ENCODE measurements at regions of chr2 and their contacts with region 1.

Region 1: DNA sequence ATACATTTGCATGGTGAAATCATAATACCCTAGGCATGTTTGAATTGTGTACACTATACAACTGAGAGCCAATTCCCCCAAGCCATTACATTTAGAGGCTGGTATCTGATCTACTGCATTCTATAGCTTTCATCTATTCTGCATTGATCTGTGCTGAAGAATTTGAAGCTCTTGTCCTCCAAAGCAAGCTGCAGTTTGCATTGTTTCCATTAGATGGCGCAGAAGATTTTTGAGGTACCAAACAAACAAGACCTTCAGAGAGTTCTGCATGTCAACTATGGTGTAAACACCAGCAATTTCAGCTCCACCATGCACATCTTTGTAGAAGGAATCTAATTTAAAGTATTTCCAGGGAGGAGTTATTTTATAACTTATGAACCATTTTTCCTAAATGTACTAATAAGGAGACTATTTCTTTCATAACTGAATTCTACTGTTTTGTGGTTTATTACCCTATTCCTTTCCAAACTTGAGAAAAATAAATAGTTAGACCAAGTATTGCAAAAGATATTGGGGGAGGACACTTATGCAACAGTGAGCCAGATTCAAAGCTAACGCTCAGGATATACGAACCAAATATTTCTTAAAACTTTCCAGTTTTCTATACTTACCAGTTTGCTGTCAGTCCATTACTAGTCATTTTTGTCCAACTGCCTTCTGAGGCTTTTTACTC is 761.8 kb upstream of the ACVR2A start:
- DNase-seq: peak; percentile 47
- H3K4me3 Mint-ChIP-seq: no peak overlapping the region
- H3K27ac Mint-ChIP-seq: no peak overlapping the region
- H3K4me1 Mint-ChIP-seq: peaks cover 5% of the 10 kb centered on the region
- H3K27me3 Mint-ChIP-seq: no peaks in the 10 kb centered on the region

Region 2: GRCh38 chr2:147045113-147045512 is 37.9 kb before region 1 on chr2:
- CTCF ChIA-PET with region 1: interaction called, 31 read pairs
- POLR2A ChIA-PET with region 1: no interaction called
- intact Hi-C with region 1: no loop called
- DNase-seq: peak; percentile 67
- H3K4me3 Mint-ChIP-seq: no peak overlapping the region
- H3K27ac Mint-ChIP-seq: no peak overlapping the region
- H3K4me1 Mint-ChIP-seq: peaks cover 3% of the 10 kb centered on the region
- H3K27me3 Mint-ChIP-seq: no peaks in the 10 kb centered on the region

Region 3: DNA sequence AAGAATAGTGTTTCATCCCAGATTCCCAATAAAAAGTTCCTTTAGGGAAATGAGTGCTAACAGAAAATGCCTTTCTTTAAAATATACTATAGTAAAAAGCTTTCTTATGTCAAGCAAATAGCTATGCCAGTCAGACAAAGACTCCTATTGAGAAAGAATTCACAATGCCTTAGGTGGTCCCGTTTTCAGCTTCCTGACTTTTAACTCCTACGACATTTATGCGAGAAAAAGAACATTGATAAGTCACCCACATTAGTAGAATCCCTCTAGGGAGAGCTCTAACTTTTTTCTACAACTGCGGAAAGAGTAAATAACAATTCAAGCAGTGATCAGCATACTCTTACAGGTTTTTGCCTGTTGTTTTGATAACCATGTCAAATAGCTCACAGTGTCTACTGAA is 11.1 kb after region 1 on chr2:
- CTCF ChIA-PET with region 1: interaction called, 26 read pairs
- POLR2A ChIA-PET with region 1: no interaction called
- intact Hi-C with region 1: no loop called
- DNase-seq: no peak
- H3K4me3 Mint-ChIP-seq: no peak overlapping the region
- H3K27ac Mint-ChIP-seq: no peak overlapping the region
- H3K4me1 Mint-ChIP-seq: peaks cover 11% of the 10 kb centered on the region
- H3K27me3 Mint-ChIP-seq: no peaks in the 10 kb centered on the region

Region 4: DNA sequence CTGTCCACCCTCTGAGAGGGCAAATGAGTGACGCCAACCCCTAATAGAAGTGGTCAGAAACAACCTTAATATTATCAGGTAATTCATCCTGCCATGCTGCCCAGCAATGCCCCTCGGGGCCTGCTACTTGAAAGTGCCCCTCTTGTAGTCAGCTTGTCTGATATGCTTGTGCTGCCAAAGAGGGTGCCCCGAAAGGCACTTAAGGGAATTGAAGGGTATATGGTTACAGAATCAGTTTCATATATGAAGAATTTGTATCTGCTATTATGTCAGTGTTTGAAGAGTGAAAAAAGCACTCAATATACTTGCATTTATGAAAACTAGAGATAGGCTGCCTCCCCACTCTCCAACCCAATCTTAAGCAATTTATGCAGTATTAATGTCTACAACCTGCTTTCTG is 114.8 kb after region 1 on chr2:
- CTCF ChIA-PET with region 1: no interaction called
- POLR2A ChIA-PET with region 1: no interaction called
- intact Hi-C with region 1: no loop called
- DNase-seq: no peak
- H3K4me3 Mint-ChIP-seq: no peak overlapping the region
- H3K27ac Mint-ChIP-seq: no peak overlapping the region
- H3K4me1 Mint-ChIP-seq: no peaks in the 10 kb centered on the region
- H3K27me3 Mint-ChIP-seq: no peaks in the 10 kb centered on the region

Region 5: DNA sequence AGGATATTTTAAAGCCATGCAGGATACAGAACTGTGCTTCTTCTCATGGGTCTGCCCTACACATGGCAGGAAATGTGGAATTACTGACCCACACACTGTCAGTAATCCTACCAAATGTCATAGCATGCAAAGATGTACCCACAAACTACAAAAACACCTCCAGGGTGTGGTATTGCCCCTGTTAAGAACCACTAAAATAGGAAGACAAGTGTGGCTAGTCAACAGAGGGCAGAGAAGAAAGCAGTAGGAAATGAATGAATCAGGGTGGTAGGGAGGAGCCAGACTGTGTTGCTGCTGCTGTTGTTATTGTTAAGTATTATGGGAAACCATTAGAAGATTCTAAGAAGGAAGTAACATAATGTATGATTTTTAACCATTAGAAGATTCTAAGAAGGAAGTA is 205.1 kb after region 1 on chr2:
- CTCF ChIA-PET with region 1: no interaction called
- POLR2A ChIA-PET with region 1: no interaction called
- intact Hi-C with region 1: loop called (anchors 1 kb)
- DNase-seq: peak; percentile 41
- H3K4me3 Mint-ChIP-seq: no peak overlapping the region
- H3K27ac Mint-ChIP-seq: peak overlapping the region; percentile 59
- H3K4me1 Mint-ChIP-seq: peaks cover 45% of the 10 kb centered on the region
- H3K27me3 Mint-ChIP-seq: no peaks in the 10 kb centered on the region

Region 6: DNA sequence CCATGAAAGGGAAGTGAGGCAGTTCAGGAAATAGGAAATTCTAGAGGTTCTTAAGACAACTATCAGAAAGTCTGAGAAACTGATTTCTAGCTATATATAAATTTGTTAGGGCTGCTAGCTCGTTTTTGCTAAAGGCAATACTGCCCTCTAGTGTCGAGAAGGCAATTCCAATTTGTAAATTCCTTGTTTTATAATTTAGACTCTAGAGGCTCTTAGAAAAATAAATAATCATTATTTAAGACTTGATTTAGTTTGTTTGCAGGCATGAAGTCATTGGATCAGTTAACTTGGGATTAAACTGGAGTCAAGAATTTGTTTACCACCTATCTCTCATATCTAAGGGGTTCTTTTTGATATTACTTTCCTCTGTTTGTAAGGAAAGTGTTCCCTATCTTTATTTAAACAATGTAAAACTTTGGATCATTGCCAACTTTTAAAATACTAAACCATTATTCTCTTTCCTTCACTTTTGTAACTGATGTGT is 828.0 kb after region 1 on chr2:
- CTCF ChIA-PET with region 1: interaction called, 93 read pairs
- POLR2A ChIA-PET with region 1: no interaction called
- intact Hi-C with region 1: loop called (anchors 1 kb)
- DNase-seq: peak; percentile 15
- H3K4me3 Mint-ChIP-seq: no peak overlapping the region
- H3K27ac Mint-ChIP-seq: no peak overlapping the region
- H3K4me1 Mint-ChIP-seq: peaks cover 5% of the 10 kb centered on the region
- H3K27me3 Mint-ChIP-seq: no peaks in the 10 kb centered on the region